Activated CD4-positive, alpha-beta memory T cell treated with anti-CD3 and anti-CD28 coated beads for 36 hours (primary cell): ENCODE measurements at regions of chr20 and their contacts with region 1.

Region 1: DNA sequence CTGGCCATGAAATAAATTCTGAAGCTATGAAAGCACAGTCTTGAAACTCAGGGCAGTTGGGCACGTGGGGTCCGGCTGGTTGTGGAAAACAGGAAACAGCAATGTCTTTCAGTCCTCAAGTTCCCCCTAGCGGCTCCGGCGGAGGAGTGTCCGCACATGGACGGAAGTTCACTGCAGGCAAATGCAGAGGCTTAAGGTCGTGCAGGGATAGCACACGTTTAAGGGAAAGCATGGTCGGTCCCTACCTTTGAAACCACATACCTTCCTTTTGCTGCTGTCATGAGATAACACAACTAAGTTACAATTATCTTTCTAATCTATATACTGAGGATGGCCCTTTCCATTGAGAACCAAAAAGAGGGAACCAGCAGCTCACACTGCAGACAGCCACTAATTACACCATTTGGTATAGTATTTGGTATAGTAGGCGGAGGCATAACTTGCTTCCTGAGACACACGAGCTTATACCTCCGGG is 52.6 kb upstream of the NFATC2 start:
- DNase-seq: peak; percentile 88
- H3K4me3 Mint-ChIP-seq: no peak overlapping the region
- H3K27ac Mint-ChIP-seq: peak overlapping the region; percentile 62
- H3K4me1 Mint-ChIP-seq: peaks cover 56% of the 10 kb centered on the region
- H3K27me3 Mint-ChIP-seq: peaks cover 12% of the 10 kb centered on the region

Region 2: GRCh38 chr20:50987592-50988210 is 607.4 kb before region 1 on chr20:
- CTCF ChIA-PET with region 1: interaction called, 3 read pairs
- POLR2A ChIA-PET with region 1: no interaction called
- intact Hi-C with region 1: loop called (anchors 10 kb)
- DNase-seq: peak; percentile 59
- H3K4me3 Mint-ChIP-seq: no peak overlapping the region
- H3K27ac Mint-ChIP-seq: no peak overlapping the region
- H3K4me1 Mint-ChIP-seq: no peaks in the 10 kb centered on the region
- H3K27me3 Mint-ChIP-seq: peaks cover 22% of the 10 kb centered on the region

Region 3: DNA sequence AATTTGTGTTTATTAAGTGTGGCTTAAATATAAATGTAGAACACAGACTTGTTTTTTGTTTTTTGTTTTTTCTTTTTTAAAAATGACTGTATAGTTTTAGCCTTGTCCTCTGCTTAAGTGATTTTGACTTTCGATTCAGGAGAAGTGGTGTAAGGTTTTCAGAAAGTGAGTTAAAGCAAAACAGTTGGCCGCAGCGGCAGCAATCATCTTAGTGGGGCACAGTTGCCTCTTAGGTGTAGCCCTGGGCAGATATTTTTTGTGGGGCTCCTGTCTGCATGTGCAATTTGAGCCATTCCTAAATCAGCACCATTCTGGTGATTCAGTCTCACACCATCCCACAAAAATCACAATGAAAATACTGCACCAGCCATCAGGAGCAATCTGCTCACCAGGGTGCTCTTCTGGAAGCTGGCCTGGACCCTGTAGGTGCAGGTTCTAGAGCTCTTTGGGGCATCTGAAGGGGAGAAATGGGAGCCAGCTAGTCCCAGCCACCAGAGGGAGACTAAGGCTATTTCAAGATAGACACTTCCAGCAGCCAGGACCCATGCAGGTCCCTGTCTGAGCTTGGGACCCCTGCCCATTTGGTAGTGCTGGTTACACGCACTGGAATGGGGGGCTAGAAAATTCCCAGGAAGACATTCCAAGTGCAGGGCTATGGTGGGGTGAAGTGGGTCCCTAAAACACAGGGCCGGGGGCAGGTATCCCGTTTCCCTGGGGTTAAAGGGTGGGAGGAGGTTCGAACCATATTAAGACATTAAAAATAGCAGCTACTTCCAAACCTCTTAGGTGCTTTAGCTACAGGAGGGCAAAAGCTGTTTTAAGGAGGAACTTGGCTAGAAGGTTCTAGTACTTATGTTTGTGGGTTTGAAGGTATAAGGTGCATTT is 209.2 kb before region 1 on chr20:
- CTCF ChIA-PET with region 1: interaction called, 47 read pairs
- POLR2A ChIA-PET with region 1: no interaction called
- intact Hi-C with region 1: loop called (anchors 2 kb)
- DNase-seq: peak; percentile 50
- H3K4me3 Mint-ChIP-seq: no peak overlapping the region
- H3K27ac Mint-ChIP-seq: no peak overlapping the region
- H3K4me1 Mint-ChIP-seq: peaks cover 73% of the 10 kb centered on the region
- H3K27me3 Mint-ChIP-seq: no peaks in the 10 kb centered on the region

Region 4: GRCh38 chr20:51480507-51481270 is 114.4 kb before region 1 on chr20:
- CTCF ChIA-PET with region 1: interaction called, 4 read pairs
- POLR2A ChIA-PET with region 1: interaction called, 3 read pairs
- intact Hi-C with region 1: loop called (anchors 2 kb)
- DNase-seq: peak; percentile 89
- H3K4me3 Mint-ChIP-seq: peak overlapping the region; percentile 61
- H3K27ac Mint-ChIP-seq: peak overlapping the region; percentile 97
- H3K4me1 Mint-ChIP-seq: peaks cover 88% of the 10 kb centered on the region
- H3K27me3 Mint-ChIP-seq: no peaks in the 10 kb centered on the region

Region 5: DNA sequence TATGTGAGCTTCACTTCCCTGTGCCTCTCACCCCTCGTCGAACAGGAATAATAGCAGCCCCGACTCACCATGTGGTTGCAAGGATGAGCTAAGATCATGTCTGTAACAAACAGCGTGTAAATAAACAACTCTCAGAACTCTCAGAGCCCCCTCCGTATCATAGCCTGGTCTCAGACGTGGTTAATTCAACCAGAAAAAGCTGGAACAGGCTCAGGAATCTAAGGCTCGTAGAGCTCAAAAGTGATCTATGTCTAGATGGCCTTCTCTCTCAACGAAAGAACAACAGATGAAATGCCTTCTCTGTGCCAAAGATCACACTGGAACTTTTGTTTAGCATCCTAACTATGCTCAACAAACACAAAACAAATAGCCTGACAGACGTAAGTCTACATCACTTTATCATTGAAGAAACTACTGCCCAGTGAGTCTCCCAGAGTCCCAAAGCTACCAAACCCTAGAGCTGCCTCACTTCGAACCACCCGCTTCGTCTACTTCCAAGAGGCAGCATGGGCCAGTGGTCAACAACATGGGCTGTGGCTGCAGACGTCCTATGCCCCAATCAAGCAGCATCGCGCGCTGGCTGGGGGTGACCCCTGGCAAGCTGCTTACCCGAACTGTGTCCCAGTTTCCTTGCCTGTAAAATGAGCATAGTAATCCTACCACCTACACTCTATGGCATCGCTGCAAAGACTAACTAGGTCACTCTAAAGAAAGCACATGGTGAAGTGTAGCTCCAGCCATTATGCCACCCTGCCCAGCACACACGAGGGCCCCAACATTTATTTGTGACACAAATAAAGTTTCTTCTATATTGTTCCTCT is 87.7 kb before region 1 on chr20:
- CTCF ChIA-PET with region 1: no interaction called
- POLR2A ChIA-PET with region 1: no interaction called
- intact Hi-C with region 1: no loop called
- DNase-seq: no peak
- H3K4me3 Mint-ChIP-seq: no peak overlapping the region
- H3K27ac Mint-ChIP-seq: no peak overlapping the region
- H3K4me1 Mint-ChIP-seq: peaks cover 49% of the 10 kb centered on the region
- H3K27me3 Mint-ChIP-seq: no peaks in the 10 kb centered on the region

Region 6: GRCh38 chr20:51531141-51531710 is 63.9 kb before region 1 on chr20:
- CTCF ChIA-PET with region 1: interaction called, 6 read pairs
- POLR2A ChIA-PET with region 1: interaction called, 7 read pairs
- intact Hi-C with region 1: loop called (anchors 2 kb)
- DNase-seq: peak; percentile 91
- H3K4me3 Mint-ChIP-seq: peak overlapping the region; percentile 84
- H3K27ac Mint-ChIP-seq: peak overlapping the region; percentile 94
- H3K4me1 Mint-ChIP-seq: peaks cover 94% of the 10 kb centered on the region
- H3K27me3 Mint-ChIP-seq: no peaks in the 10 kb centered on the region

Region 7: DNA sequence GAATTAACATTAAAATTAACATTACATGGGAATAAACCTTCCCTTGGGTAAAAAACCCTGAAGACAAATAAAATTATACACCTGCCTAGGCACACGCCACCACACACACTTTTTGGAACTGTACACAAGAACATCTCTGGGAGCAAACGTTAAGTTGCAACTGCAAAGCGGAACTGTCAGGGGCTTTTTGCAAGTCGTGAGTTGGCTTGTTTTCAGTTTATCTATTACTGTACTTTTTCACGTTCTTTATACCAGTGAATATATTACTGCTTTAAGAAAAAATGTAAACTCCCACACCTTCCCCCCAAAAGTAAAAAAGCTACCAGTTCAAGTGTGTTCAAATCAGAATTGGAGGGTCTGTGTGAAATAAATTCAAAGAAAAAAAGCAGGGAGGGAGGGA is 13.0 kb after region 1 on chr20:
- CTCF ChIA-PET with region 1: interaction called, 44 read pairs
- POLR2A ChIA-PET with region 1: interaction called, 3 read pairs
- intact Hi-C with region 1: loop called (anchors 1 kb)
- DNase-seq: peak; percentile 61
- H3K4me3 Mint-ChIP-seq: peak overlapping the region; percentile 65
- H3K27ac Mint-ChIP-seq: peak overlapping the region; percentile 88
- H3K4me1 Mint-ChIP-seq: peaks cover 48% of the 10 kb centered on the region
- H3K27me3 Mint-ChIP-seq: peaks cover 23% of the 10 kb centered on the region

Region 8: GRCh38 chr20:51631011-51631950 is 36.2 kb after region 1 on chr20:
- CTCF ChIA-PET with region 1: interaction called, 23 read pairs
- POLR2A ChIA-PET with region 1: no interaction called
- intact Hi-C with region 1: loop called (anchors 5 kb)
- DNase-seq: peak; percentile 68
- H3K4me3 Mint-ChIP-seq: peak overlapping the region; percentile 38
- H3K27ac Mint-ChIP-seq: peak overlapping the region; percentile 82
- H3K4me1 Mint-ChIP-seq: peaks cover 79% of the 10 kb centered on the region
- H3K27me3 Mint-ChIP-seq: peaks cover 21% of the 10 kb centered on the region